ENCODE measurements at regions of chr7 and their contacts with region 1.

Region 1: GRCh38 chr7:107150375-107151073 is 18.3 kb upstream of the HBP1 start:
- DNase-seq: peak; percentile 51
- ATAC-seq: peak; percentile 53
- H3K4me3 ChIP-seq: no peak overlapping the region
- H3K27ac ChIP-seq: no peak overlapping the region
- H3K4me1 ChIP-seq: peaks cover 2 to 17% of the 10 kb centered on the region in 2 experiments; a peak in 3 of 4 replicates
- H3K27me3 ChIP-seq: no peaks in the 10 kb centered on the region
- CTCF ChIP-seq: peak; percentile 51 to 77 (median 75); a peak in 5 of 6 replicates
- POLR2A ChIP-seq: no peak
- RAD21 ChIP-seq: peak; percentile 75

Region 2: DNA sequence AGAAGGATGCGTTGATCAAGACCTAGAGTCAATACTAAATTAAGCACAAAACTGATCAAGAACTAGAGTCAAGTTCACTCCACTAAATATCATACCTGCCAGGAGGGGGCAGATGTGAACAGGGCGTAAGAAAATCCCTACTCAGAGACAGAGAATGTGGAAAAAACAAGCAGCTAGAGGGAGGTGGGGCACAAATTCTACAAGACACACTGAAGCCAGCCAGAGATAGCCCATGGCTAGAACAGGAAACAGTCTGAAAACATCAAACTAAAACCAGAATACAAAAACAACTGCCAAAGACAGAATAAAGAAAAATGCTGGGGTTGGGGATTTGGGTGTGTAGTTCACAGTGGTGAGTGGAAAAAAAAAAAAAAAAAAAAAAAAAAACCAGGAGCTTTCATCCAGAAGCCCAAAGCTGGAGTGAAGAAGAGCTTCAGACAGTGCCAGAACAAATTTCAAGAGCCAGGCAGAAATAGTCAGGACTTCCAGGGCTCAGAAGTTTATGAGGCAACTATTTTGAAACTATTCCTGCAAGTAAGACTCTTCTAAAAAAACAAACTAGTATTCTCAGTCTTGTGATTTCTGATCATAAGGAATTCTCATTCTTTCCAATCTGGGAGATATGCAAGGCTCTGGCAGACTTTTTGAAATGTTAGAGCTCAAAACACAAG is 607.8 kb before region 1 on chr7:
- CTCF ChIA-PET with region 1: interaction called, 3 read pairs
- POLR2A ChIA-PET with region 1: no interaction called
- RAD21 ChIA-PET with region 1: no interaction called
- intact Hi-C with region 1: loop called (anchors 10 kb)
- DNase-seq: peak; percentile 77
- ATAC-seq: peak; percentile 97
- H3K4me3 ChIP-seq: no peak overlapping the region
- H3K27ac ChIP-seq: no peak overlapping the region
- H3K4me1 ChIP-seq: peaks cover 0 to 14% of the 10 kb centered on the region in 2 experiments; a peak in 3 of 4 replicates
- H3K27me3 ChIP-seq: no peaks in the 10 kb centered on the region
- CTCF ChIP-seq: peak; percentile 68 to 96 (median 80)
- POLR2A ChIP-seq: no peak
- RAD21 ChIP-seq: peak; percentile 91

Region 3: DNA sequence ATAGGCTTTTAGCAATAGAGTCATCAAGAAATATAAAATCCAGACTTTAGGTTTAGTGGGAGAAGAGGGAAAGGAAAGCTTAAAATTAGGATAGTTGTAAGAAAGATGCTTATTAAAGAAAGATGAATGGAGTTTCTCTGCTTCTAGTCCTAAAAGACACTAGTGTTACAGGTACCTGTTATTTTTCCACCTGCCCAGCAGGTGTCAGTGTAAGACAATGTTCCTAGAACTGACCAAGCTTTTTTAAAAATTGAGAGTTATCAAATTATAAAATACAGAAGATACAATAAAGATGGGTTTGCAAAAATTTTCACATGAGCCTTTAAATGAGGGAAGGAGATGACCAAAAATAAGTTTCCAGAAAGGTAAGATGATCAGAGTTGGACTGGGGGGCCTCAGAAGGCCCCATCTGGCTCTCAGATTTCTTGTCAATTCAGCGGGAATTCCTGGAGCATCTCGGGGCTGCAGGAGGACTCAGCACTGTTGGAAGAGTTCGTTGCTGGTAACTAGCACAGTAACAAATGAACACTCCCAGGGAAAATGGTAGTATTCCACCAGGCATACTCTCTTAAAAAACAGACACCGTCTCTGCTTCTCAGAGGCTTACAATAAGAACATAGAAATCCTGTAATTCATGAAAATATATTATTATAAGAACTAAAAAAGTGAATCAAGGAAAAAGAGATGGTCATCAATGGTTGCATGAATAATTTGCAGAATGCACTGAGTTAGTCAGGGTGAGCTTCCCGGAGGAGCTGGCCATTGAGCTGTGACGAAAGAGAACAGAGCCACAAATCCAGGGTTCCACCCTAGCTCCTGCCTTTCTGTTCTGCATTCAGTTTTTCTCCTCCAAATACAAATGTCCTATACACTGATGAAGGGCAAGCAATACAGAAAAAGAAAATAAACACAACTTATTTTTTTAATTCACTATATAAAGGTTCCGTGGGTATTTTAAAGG is 357.2 kb before region 1 on chr7:
- CTCF ChIA-PET with region 1: interaction called, 22 read pairs
- POLR2A ChIA-PET with region 1: no interaction called
- RAD21 ChIA-PET with region 1: no interaction called
- intact Hi-C with region 1: loop called (anchors 1 kb)
- DNase-seq: peak; percentile 38
- ATAC-seq: peak; percentile 69
- H3K4me3 ChIP-seq: no peak overlapping the region
- H3K27ac ChIP-seq: no peak overlapping the region
- H3K4me1 ChIP-seq: no peaks in the 10 kb centered on the region
- H3K27me3 ChIP-seq: no peaks in the 10 kb centered on the region
- CTCF ChIP-seq: peak; percentile 57 to 78 (median 70); a peak in 5 of 6 replicates
- POLR2A ChIP-seq: no peak
- RAD21 ChIP-seq: peak; percentile 89

Region 4: DNA sequence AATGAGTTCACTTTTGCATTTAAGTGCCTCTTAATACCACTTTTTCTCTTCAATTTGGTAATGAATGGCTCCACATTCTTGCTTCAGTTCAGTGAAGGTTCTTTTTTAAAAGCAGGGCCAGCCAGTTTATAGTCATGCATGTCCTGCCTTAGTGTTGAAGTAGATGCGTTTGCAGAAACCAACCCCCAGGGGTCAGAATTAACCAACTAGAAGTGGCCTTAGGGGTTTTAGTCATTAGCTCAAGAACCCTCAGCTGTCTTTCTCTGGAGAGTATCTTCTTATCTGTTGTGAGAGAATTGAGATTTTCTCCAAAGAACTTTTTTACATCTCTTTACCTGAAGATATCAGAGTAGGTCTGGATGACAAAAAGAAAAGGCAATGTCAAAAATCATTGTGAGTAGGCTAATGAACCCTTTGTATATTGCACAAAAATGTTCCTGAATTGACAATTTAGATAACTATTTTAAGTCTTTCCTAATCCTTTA is 203.2 kb before region 1 on chr7:
- CTCF ChIA-PET with region 1: interaction called, 124 read pairs
- POLR2A ChIA-PET with region 1: no interaction called
- RAD21 ChIA-PET with region 1: interaction called, 4 to 12 read pairs
- intact Hi-C with region 1: loop called (anchors 1 kb)
- DNase-seq: peak; percentile 68
- ATAC-seq: peak; percentile 97
- H3K4me3 ChIP-seq: no peak overlapping the region
- H3K27ac ChIP-seq: no peak overlapping the region
- H3K4me1 ChIP-seq: no peaks in the 10 kb centered on the region
- H3K27me3 ChIP-seq: no peaks in the 10 kb centered on the region
- CTCF ChIP-seq: peak; percentile 67 to 78 (median 73)
- POLR2A ChIP-seq: no peak
- RAD21 ChIP-seq: peak; percentile 87

Region 5: DNA sequence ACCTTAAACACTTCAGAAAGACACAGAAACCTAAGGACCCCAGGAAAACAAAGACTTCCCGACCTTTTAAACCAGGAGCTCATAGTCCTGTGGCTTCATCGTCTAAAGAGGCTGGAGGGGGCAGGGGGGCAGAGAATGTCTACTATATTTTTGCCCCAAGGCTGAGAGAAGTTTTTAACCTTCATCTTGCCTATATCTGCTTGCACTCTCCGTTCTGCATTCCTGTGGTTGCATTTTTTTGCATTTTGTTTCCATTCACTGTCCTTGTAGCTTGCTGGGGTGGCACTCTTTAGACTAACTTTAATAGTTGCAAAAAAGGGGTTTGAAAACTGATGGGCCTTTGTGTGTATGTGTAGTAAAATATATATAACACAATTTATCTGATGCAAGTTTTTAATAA is 82.4 kb before region 1 on chr7:
- CTCF ChIA-PET with region 1: no interaction called
- POLR2A ChIA-PET with region 1: no interaction called
- RAD21 ChIA-PET with region 1: no interaction called
- intact Hi-C with region 1: no loop called
- DNase-seq: no peak
- ATAC-seq: no peak
- H3K4me3 ChIP-seq: no peak overlapping the region
- H3K27ac ChIP-seq: no peak overlapping the region
- H3K4me1 ChIP-seq: no peaks in the 10 kb centered on the region
- H3K27me3 ChIP-seq: no peaks in the 10 kb centered on the region
- CTCF ChIP-seq: no peak
- POLR2A ChIP-seq: no peak
- RAD21 ChIP-seq: no peak

Region 6: GRCh38 chr7:107123392-107123791 is 27.1 kb before region 1 on chr7:
- CTCF ChIA-PET with region 1: no interaction called
- POLR2A ChIA-PET with region 1: no interaction called
- RAD21 ChIA-PET with region 1: no interaction called
- intact Hi-C with region 1: no loop called
- DNase-seq: no peak
- ATAC-seq: no peak
- H3K4me3 ChIP-seq: no peak overlapping the region
- H3K27ac ChIP-seq: no peak overlapping the region
- H3K4me1 ChIP-seq: no peaks in the 10 kb centered on the region
- H3K27me3 ChIP-seq: no peaks in the 10 kb centered on the region
- CTCF ChIP-seq: no peak
- POLR2A ChIP-seq: no peak
- RAD21 ChIP-seq: no peak

Region 7: GRCh38 chr7:107168233-107169119 is 18.0 kb after region 1 on chr7 and contains the start of gene HBP1:
- CTCF ChIA-PET with region 1: interaction called, 11 read pairs
- POLR2A ChIA-PET with region 1: interaction called, 5 read pairs
- RAD21 ChIA-PET with region 1: interaction called in 1 of 2 experiments, 3 read pairs
- intact Hi-C with region 1: no loop called
- DNase-seq: peak; percentile 100
- ATAC-seq: peak; percentile 88
- H3K4me3 ChIP-seq: peak within 1 kb of the TSS; percentile 70 to 75
- H3K27ac ChIP-seq: peak within 1 kb of the TSS; percentile 67
- H3K4me1 ChIP-seq: peaks cover 5 to 18% of the 10 kb centered on the region in 2 experiments; a peak in 3 of 4 replicates
- H3K27me3 ChIP-seq: no peaks in the 10 kb centered on the region
- CTCF ChIP-seq: no peak
- POLR2A ChIP-seq: no peak
- RAD21 ChIP-seq: no peak
- total RNA-seq, gene HBP1: 24.3 TPM

Measured in HCT116 (cell line).